CD8-positive, alpha-beta memory T cell (primary cell): ENCODE measurements at regions of chr1 and their contacts with region 1.

Region 1: DNA sequence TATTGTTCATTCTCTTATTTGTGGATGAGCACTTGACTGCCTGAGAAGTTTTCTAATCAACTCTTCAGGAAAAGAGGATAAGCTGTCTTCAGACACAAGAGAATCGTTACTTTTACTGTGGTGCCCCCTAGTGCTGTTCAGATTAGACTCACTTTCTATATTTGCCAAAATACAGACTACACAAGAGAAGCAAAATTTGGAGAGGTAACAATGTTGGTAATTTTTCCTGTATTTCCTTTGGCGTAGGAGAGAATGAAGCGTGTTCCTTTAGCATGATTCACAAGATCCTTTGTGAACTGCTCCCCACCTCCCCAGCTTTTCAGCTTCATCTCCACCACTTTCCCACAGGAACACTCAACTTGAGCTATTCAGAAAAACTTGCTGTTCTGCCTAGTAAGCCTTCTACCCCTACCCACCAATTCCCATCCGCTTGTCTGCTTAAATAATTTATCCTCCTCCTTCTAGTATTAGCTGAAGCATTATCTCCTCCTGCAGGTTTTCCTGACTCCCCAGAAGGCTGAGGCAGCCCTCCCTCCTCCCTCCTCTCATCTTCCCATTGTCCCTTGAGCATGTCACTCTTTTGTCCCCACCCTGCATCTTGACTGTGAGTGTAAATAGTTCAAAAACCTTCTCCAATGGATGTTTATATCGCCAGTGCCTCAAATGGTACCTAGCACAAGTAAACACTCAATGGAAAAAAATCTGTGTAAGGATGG is 4.5 kb downstream of the TNFSF4 start:
- DNase-seq: no peak
- H3K4me3 ChIP-seq: no peak overlapping the region
- H3K4me3 Mint-ChIP-seq: no peak overlapping the region
- H3K27ac ChIP-seq: no peak overlapping the region
- H3K27ac Mint-ChIP-seq: peak overlapping the region in 3 of 8 donors; percentile 13 to 25 (median 19)
- H3K4me1 ChIP-seq: peaks cover 38% of the 10 kb centered on the region
- H3K4me1 Mint-ChIP-seq: peaks cover 41 to 48% (median 46%) of the 10 kb centered on the region in 3 donors
- H3K27me3 ChIP-seq: no peaks in the 10 kb centered on the region
- H3K27me3 Mint-ChIP-seq: no peaks in the 10 kb centered on the region

Region 2: GRCh38 chr1:172466795-172467407 is 735.7 kb before region 1 on chr1:
- CTCF ChIA-PET with region 1: no interaction called
- POLR2A ChIA-PET with region 1: no interaction called
- DNase-seq: no peak
- H3K4me3 ChIP-seq: no peak overlapping the region
- H3K4me3 Mint-ChIP-seq: no peak overlapping the region
- H3K27ac ChIP-seq: no peak overlapping the region
- H3K27ac Mint-ChIP-seq: no peak overlapping the region
- H3K4me1 ChIP-seq: no peaks in the 10 kb centered on the region
- H3K4me1 Mint-ChIP-seq: no peaks in the 10 kb centered on the region
- H3K27me3 ChIP-seq: no peaks in the 10 kb centered on the region
- H3K27me3 Mint-ChIP-seq: peaks cover 1 to 16% of the 10 kb centered on the region in 2 donors

Region 3: DNA sequence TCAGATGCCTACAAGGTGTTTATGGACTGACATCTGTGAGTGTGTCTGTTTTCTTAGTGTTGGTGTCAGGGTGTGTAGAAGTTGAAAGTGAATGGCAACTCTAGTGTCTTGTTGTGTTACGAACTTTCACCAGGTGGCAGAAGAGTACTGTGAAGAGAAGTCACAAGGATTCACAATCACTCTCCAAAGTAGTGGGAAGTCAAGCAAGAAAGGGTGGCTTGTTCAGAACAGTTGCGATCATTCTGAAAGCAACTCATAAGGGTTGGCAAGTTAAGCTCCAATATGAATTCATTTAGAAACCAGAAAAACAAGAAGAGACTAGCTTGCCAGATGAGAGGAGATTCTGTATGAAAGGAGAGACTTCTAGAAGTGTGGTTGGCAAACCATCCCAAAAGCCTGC is 457.6 kb before region 1 on chr1:
- CTCF ChIA-PET with region 1: interaction called, 119 read pairs
- POLR2A ChIA-PET with region 1: no interaction called
- DNase-seq: peak in 2 of 5 donors; percentile 44 to 52
- H3K4me3 ChIP-seq: no peak overlapping the region
- H3K4me3 Mint-ChIP-seq: peak overlapping the region in 3 of 7 donors; percentile 19 to 49 (median 33)
- H3K27ac ChIP-seq: no peak overlapping the region
- H3K27ac Mint-ChIP-seq: peak overlapping the region in 3 of 8 donors; percentile 3 to 65 (median 6)
- H3K4me1 ChIP-seq: peaks cover 24% of the 10 kb centered on the region
- H3K4me1 Mint-ChIP-seq: peaks cover 31 to 39% (median 36%) of the 10 kb centered on the region in 3 donors
- H3K27me3 ChIP-seq: no peaks in the 10 kb centered on the region
- H3K27me3 Mint-ChIP-seq: peaks cover 4 to 6% of the 10 kb centered on the region in 2 donors

Region 4: GRCh38 chr1:172778456-172779455 is 423.8 kb before region 1 on chr1:
- CTCF ChIA-PET with region 1: interaction called, 29 read pairs
- POLR2A ChIA-PET with region 1: no interaction called
- DNase-seq: peak in 2 of 5 donors; percentile 10 to 18
- H3K4me3 ChIP-seq: peak overlapping the region; percentile 2
- H3K4me3 Mint-ChIP-seq: peak overlapping the region; percentile 35 to 84 (median 68)
- H3K27ac ChIP-seq: no peak overlapping the region
- H3K27ac Mint-ChIP-seq: peak overlapping the region in 5 of 8 donors; percentile 11 to 58 (median 33)
- H3K4me1 ChIP-seq: no peaks in the 10 kb centered on the region
- H3K4me1 Mint-ChIP-seq: peaks cover 15 to 23% (median 22%) of the 10 kb centered on the region in 3 donors
- H3K27me3 ChIP-seq: no peaks in the 10 kb centered on the region
- H3K27me3 Mint-ChIP-seq: no peaks in the 10 kb centered on the region

Region 5: GRCh38 chr1:172826096-172826743 is 376.4 kb before region 1 on chr1:
- CTCF ChIA-PET with region 1: interaction called, 56 read pairs
- POLR2A ChIA-PET with region 1: no interaction called
- DNase-seq: no peak
- H3K4me3 ChIP-seq: peak overlapping the region; percentile 19
- H3K4me3 Mint-ChIP-seq: no peak overlapping the region
- H3K27ac ChIP-seq: no peak overlapping the region
- H3K27ac Mint-ChIP-seq: no peak overlapping the region
- H3K4me1 ChIP-seq: peaks cover 25% of the 10 kb centered on the region
- H3K4me1 Mint-ChIP-seq: no peaks in the 10 kb centered on the region
- H3K27me3 ChIP-seq: no peaks in the 10 kb centered on the region
- H3K27me3 Mint-ChIP-seq: no peaks in the 10 kb centered on the region

Region 6: DNA sequence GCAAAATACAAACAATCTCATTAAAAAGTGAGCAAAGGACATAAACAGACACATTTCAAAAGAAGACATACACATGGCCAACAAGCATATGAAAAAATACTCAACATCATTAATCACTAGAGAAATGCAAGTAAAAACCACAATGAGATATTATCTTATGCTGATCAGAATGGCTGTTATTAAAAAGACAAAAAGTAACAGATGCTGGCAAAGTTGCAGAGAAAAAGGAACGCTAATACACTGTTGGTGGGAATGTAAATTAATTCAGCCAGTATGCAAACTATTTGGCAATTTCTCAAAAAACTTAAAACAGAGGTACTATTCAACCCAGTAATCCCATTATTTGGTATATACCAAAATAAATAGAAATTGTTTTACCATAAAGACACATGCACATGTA is 119.7 kb before region 1 on chr1:
- CTCF ChIA-PET with region 1: no interaction called
- POLR2A ChIA-PET with region 1: no interaction called
- DNase-seq: no peak
- H3K4me3 ChIP-seq: no peak overlapping the region
- H3K4me3 Mint-ChIP-seq: no peak overlapping the region
- H3K27ac ChIP-seq: no peak overlapping the region
- H3K27ac Mint-ChIP-seq: no peak overlapping the region
- H3K4me1 ChIP-seq: no peaks in the 10 kb centered on the region
- H3K4me1 Mint-ChIP-seq: no peaks in the 10 kb centered on the region
- H3K27me3 ChIP-seq: no peaks in the 10 kb centered on the region
- H3K27me3 Mint-ChIP-seq: peaks cover 0 to 4% of the 10 kb centered on the region in 2 donors

Region 7: DNA sequence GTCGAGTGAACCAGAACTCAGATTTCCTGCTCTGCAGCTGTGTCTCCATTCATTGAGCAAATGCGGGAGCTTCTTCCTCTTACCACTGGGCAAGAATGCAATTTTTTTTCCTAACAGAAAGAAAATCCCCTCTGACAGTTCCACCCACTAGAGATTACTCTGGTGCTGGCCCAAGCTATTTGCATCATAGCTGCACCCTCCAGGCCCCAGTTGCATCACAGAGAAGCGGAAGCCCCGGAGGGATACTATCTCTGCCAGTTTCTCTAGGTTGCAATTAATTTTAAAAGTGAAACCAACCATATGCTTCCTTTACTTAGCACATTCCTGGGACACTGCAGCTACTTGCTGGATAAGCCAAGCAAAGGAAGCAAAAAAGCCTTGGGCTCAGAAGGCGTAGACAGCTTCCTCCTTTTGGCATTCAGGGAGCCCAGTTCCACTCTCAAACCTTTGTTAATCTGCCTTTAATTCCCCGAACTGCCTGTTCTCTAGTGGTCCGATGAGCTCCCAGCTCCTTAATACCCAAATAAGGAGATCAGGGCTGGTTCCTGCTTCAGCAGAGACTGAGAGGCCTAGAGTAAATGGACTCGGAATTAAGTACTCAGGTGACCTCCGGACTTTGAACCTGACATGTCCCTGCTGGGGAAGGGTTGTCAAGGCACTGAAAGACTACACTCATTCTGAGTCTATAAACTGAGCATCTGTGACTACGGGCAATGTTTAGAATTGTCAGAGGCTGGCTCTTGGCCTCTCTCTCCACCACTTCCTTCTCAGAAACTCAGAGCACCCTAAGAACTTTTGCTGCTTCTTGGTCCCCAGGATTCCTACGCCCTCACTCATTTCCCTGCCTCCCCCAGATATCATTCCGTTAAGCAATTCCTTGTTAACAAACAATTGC is 79.4 kb before region 1 on chr1:
- CTCF ChIA-PET with region 1: no interaction called
- POLR2A ChIA-PET with region 1: no interaction called
- DNase-seq: no peak
- H3K4me3 ChIP-seq: no peak overlapping the region
- H3K4me3 Mint-ChIP-seq: peak overlapping the region in 1 of 7 donors; percentile 17
- H3K27ac ChIP-seq: no peak overlapping the region
- H3K27ac Mint-ChIP-seq: no peak overlapping the region
- H3K4me1 ChIP-seq: no peaks in the 10 kb centered on the region
- H3K4me1 Mint-ChIP-seq: peaks cover 0 to 11% (median 0%) of the 10 kb centered on the region in 3 donors
- H3K27me3 ChIP-seq: no peaks in the 10 kb centered on the region
- H3K27me3 Mint-ChIP-seq: peaks cover 0 to 2% of the 10 kb centered on the region in 2 donors

Region 8: GRCh38 chr1:173137107-173137706 is 65.4 kb before region 1 on chr1:
- CTCF ChIA-PET with region 1: no interaction called
- POLR2A ChIA-PET with region 1: no interaction called
- DNase-seq: no peak
- H3K4me3 ChIP-seq: no peak overlapping the region
- H3K4me3 Mint-ChIP-seq: no peak overlapping the region
- H3K27ac ChIP-seq: no peak overlapping the region
- H3K27ac Mint-ChIP-seq: no peak overlapping the region
- H3K4me1 ChIP-seq: no peaks in the 10 kb centered on the region
- H3K4me1 Mint-ChIP-seq: no peaks in the 10 kb centered on the region
- H3K27me3 ChIP-seq: no peaks in the 10 kb centered on the region
- H3K27me3 Mint-ChIP-seq: peaks cover 0 to 3% of the 10 kb centered on the region in 2 donors